IMR-90 (cell line): ENCODE measurements at regions of chr7 and their contacts with region 1.

Region 1: DNA sequence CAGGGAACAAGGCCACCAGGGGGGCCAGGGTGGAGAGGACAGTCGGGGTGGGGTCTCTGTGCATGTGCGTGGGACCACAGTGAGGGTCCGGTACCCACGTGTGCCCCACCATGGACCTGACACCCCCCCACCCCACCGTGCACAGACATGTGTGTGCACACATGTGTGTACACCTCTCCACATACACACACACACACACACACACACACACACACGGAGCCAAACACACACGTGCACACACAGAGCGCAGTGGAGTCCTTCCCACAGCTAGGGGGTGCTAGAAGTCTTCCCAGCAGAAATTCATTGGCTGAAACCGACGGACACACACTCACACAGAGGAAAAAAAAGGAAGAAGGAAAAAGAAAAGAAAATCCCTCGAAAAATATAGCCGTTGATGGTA is 42.8 kb upstream of the GNA12 start:
- DNase-seq: peak; percentile 82
- ATAC-seq: peak; percentile 98
- H3K4me3 ChIP-seq: no peak overlapping the region
- H3K27ac ChIP-seq: no peak overlapping the region
- H3K4me1 ChIP-seq: no peaks in the 10 kb centered on the region
- H3K27me3 ChIP-seq: peaks cover 2% of the 10 kb centered on the region; the same call in 1 of the 2 replicates
- CTCF ChIP-seq: peak; percentile 76
- POLR2A ChIP-seq: no peak
- RAD21 ChIP-seq: peak; percentile 81

Region 2: GRCh38 chr7:2941216-2941859 is 54.4 kb after region 1 on chr7:
- CTCF ChIA-PET with region 1: no interaction called
- POLR2A ChIA-PET with region 1: no interaction called
- dilution Hi-C with region 1: no loop called
- in situ Hi-C with region 1: no loop called
- intact Hi-C with region 1: no loop called
- DNase-seq: no peak
- ATAC-seq: no peak
- H3K4me3 ChIP-seq: no peak overlapping the region
- H3K27ac ChIP-seq: no peak overlapping the region
- H3K4me1 ChIP-seq: no peaks in the 10 kb centered on the region
- H3K27me3 ChIP-seq: no peaks in the 10 kb centered on the region; the same call in 1 of the 2 replicates
- CTCF ChIP-seq: no peak
- POLR2A ChIP-seq: no peak
- RAD21 ChIP-seq: no peak

Region 3: GRCh38 chr7:3897438-3898385 is 1010.8 kb after region 1 on chr7:
- CTCF ChIA-PET with region 1: no interaction called
- POLR2A ChIA-PET with region 1: no interaction called
- dilution Hi-C with region 1: no loop called
- in situ Hi-C with region 1: loop called (anchors 10 kb)
- intact Hi-C with region 1: no loop called
- DNase-seq: peak; percentile 62
- ATAC-seq: peak; percentile 85
- H3K4me3 ChIP-seq: no peak overlapping the region
- H3K27ac ChIP-seq: no peak overlapping the region
- H3K4me1 ChIP-seq: no peaks in the 10 kb centered on the region; the same call in 1 of the 2 replicates
- H3K27me3 ChIP-seq: no peaks in the 10 kb centered on the region
- CTCF ChIP-seq: peak; percentile 65
- POLR2A ChIP-seq: no peak
- RAD21 ChIP-seq: peak; percentile 63